Psoas muscle (tissue), 8 donors: ENCODE measurements at regions of chr5 and their contacts with region 1.

Region 1: GRCh38 chr5:164504141-164504772 is 998.8 kb downstream of the MAT2B start:
- DNase-seq: no peak
- ATAC-seq: peak in 2 of 4 donors; percentile 48 to 62
- H3K4me3 ChIP-seq: no peak overlapping the region
- H3K27ac ChIP-seq: no peak overlapping the region
- H3K4me1 ChIP-seq: no peaks in the 10 kb centered on the region
- H3K27me3 ChIP-seq: no peaks in the 10 kb centered on the region
- CTCF ChIP-seq: peak; percentile 53

Region 2: DNA sequence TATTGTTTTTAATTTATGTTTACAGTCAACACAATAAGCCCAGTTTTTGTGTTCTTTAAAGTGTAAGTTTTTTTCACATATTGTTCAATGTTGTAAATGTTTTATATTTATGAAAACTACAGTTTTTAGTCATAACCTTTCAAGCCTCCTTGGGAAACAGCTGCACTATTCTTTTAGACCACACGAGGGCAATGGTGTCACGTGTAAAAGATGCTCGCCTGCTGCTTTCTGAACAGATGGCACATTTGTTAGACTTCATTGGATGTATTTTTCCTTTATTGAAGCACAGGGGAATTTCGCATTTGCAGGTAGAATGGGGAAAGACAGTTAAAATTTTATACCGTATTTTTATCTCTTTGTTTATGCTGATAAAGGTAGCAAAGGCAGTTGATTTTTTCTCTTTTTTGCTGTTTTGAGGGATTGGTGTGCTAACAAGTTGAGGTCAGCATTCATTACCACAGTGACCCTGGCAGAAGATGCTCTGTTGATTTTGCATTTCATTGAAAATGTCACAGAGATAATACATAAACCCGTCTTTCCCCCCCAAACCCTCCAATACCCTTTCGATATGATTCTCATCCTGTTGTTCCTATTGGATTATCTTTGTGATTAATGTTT is 939.8 kb before region 1 on chr5:
- intact Hi-C with region 1: loop called (anchors 5 to 10 kb)
- DNase-seq: no peak
- ATAC-seq: peak in 2 of 4 donors; percentile 58 to 70
- H3K4me3 ChIP-seq: no peak overlapping the region
- H3K27ac ChIP-seq: no peak overlapping the region
- H3K4me1 ChIP-seq: peaks cover 9% of the 10 kb centered on the region
- H3K27me3 ChIP-seq: peaks cover 7 to 35% (median 10%) of the 10 kb centered on the region in 3 donors
- CTCF ChIP-seq: peak; percentile 93

Region 3: DNA sequence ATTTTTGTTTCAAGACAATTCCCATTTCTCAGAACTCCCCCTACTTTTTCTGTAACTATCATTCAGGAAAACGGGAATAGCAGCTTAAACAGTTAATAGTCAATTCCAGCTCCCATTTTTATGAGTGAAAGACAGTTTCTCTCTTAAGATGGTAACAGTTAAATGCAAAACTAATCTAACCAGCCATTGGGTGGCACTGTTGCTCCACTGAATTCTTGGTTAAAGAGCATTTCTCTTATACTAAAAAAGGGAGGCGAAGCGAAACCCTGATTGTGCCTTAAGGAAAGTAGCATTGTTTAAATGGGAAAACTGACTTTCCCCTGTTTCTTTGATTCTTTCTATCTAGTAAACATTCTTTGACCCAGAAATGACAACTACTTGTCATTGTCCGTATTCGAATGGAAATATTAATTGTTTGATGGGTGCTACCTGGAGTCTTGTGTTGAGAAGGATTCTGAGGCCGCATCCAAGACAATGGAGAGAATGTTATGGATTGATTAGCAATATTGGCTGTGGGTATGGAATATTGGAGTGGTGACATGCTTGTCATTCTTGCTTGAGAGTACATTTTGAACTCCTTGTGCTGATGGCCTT is 491.1 kb before region 1 on chr5:
- intact Hi-C with region 1: loop called in 1 of 2 experiments (anchors 5 kb)
- DNase-seq: peak in 1 of 2 donors; percentile 8
- ATAC-seq: peak in 1 of 4 donors; percentile 51
- H3K4me3 ChIP-seq: no peak overlapping the region
- H3K27ac ChIP-seq: no peak overlapping the region
- H3K4me1 ChIP-seq: no peaks in the 10 kb centered on the region
- H3K27me3 ChIP-seq: no peaks in the 10 kb centered on the region
- CTCF ChIP-seq: peak; percentile 51